ENCODE measurements at regions of chr4 and their contacts with region 1.

Region 1: GRCh38 chr4:62243895-62244294 is 1043.8 kb downstream of the ADGRL3 start:
- DNase-seq: no peak
- ATAC-seq: no peak
- H3K4me3 ChIP-seq: no peak overlapping the region
- H3K4me3 Mint-ChIP-seq: no peak overlapping the region
- H3K27ac ChIP-seq: no peak overlapping the region
- H3K27ac Mint-ChIP-seq: no peak overlapping the region
- H3K4me1 ChIP-seq: no peaks in the 10 kb centered on the region
- H3K4me1 Mint-ChIP-seq: peaks cover 0 to 5% of the 10 kb centered on the region in 2 donors
- H3K27me3 ChIP-seq: no peaks in the 10 kb centered on the region
- H3K27me3 Mint-ChIP-seq: no peaks in the 10 kb centered on the region
- CTCF ChIP-seq: no peak

Region 2: GRCh38 chr4:62644372-62644771 is 400.5 kb after region 1 on chr4:
- intact Hi-C with region 1: loop called (anchors 10 kb)
- DNase-seq: no peak
- ATAC-seq: no peak
- H3K4me3 ChIP-seq: no peak overlapping the region
- H3K4me3 Mint-ChIP-seq: no peak overlapping the region
- H3K27ac ChIP-seq: no peak overlapping the region
- H3K27ac Mint-ChIP-seq: no peak overlapping the region
- H3K4me1 ChIP-seq: no peaks in the 10 kb centered on the region
- H3K4me1 Mint-ChIP-seq: no peaks in the 10 kb centered on the region
- H3K27me3 ChIP-seq: no peaks in the 10 kb centered on the region
- H3K27me3 Mint-ChIP-seq: no peaks in the 10 kb centered on the region
- CTCF ChIP-seq: no peak